Dorsolateral prefrontal cortex (tissue), 120 donors: ENCODE measurements at regions of chr7 and their contacts with region 1.

Region 1: DNA sequence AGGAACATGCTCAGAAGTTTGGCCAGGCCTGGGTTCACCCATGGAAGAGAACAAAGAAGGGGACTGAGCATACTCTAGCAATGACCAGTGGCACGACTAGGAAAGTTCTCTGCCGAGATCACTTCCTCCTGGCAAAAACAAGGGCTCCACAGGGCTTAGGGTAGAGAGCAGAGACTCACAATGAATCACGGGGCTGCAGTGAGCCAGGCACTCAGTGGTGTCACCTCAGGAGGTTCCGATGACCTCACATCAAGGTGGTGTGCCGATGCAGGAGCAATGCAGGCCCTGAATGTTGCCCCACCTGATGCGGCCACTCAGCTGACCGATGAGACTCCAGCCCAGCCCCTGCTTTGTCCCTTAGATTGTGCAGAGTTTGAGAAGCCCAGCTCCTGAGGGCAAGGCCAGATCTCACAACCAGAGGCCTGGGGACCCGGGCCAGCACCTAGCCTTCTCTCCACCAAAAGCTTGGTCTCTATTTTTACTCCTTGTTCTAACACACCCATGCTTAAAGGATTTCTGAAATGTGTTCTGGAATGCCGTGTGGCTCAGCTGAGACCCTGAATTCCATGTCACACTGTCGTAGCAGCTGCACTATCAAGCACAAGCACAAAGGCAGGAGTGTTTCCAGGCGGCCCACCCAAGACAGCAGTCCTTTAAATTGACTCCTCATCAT is 60.9 kb downstream of the COBL start:
- DNase-seq: peak in 1 of 10 donors; percentile 44
- H3K4me3 ChIP-seq: peak overlapping the region in 3 of 59 donors; percentile 2 to 33 (median 3)
- H3K27ac ChIP-seq: peak overlapping the region; percentile 33 to 100 (median 94)
- H3K27me3 ChIP-seq: no peaks in the 10 kb centered on the region
- CTCF ChIP-seq: no peak

Region 2: GRCh38 chr7:51209426-51209825 is 46.2 kb before region 1 on chr7:
- intact Hi-C with region 1: no loop called
- DNase-seq: no peak
- H3K4me3 ChIP-seq: no peak overlapping the region
- H3K27ac ChIP-seq: peak overlapping the region in 10 of 59 donors; percentile 4 to 53 (median 44)
- H3K27me3 ChIP-seq: no peaks in the 10 kb centered on the region
- CTCF ChIP-seq: no peak

Region 3: DNA sequence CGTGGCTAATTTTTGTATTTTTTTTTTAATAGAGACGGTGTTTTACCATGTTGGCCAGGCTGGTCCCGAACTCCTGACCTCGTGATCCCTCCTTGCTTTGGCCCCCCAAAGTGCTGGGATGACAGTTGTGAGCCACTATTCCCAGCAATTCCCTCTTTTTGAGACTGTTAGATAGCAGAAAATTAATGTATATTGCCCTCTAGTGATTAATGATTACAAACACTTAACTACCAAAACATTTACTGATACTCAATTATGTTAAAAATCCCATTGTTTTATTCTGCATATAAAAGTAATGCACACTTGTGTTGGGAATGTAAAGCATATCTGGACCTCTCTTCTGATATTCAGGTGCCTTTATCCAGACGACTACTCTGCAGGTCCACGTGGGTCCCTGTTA is 102.1 kb after region 1 on chr7:
- intact Hi-C with region 1: loop called in 1 of 2 experiments (anchors 5 kb)
- DNase-seq: no peak
- H3K4me3 ChIP-seq: no peak overlapping the region
- H3K27ac ChIP-seq: peak overlapping the region in 1 of 59 donors; percentile 1
- H3K27me3 ChIP-seq: no peaks in the 10 kb centered on the region
- CTCF ChIP-seq: peak in 51 of 56 donors; percentile 28 to 79 (median 52)